ENCODE measurements at regions of chr19 and their contacts with region 1.

Region 1: DNA sequence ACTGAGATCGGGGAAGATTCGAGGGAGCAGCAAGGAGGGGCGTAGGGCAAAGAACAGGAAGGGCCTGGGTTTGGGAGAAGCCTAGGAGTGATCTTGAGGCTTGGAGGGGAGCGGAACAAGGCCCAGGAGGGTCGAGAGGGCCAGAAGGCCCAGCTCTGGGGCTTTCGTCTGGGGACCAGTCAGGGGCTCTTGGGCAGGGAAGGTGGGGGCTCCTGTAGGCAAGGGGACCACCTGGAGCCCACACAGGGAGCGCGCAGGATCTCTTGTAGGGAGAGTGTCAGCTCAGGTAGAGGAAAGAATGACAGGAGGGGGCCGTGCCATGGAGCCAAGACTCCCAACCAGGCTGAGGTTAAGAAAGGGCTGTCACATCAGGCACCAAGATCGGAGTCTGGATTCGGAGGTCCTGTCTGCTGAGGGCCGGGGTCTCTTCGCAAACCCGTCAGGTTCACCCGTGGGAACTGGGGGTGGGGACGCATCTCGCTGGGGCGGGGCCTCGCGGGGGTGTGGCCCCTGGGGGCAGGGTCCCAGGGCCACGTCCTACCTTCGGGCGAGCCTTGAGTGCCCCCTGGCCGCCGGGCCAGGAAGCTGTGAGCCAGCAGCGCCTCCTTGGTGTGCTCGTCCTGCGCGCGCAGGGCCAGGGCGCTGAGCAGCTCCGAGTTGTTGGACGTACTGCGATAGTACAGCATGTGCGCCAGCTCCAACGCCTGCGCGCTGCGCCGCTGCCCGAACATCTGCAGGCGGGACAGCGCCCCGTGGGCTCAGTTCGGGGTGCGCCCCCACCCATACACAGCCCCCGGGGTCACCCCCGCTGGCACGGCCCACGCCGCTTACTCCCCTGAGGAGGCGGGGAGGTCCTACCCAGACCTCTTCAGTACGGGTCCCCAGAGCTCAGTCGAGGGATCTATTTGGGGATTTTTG is 8.4 kb downstream of the EMP3 start:
- DNase-seq: peak; percentile 90 to 96 (median 93)
- ATAC-seq: peak; percentile 77
- H3K4me3 ChIP-seq: peak overlapping the region; percentile 77
- H3K4me3 Mint-ChIP-seq: peak overlapping the region; percentile 83 to 100 (median 97)
- H3K27ac ChIP-seq: peak overlapping the region; percentile 95
- H3K27ac Mint-ChIP-seq: peak overlapping the region; percentile 93 to 100 (median 97)
- H3K4me1 ChIP-seq: peaks cover 32 to 43% of the 10 kb centered on the region in 2 donors
- H3K4me1 Mint-ChIP-seq: peaks cover 25 to 61% (median 47%) of the 10 kb centered on the region in 7 donors
- H3K27me3 ChIP-seq: no peaks in the 10 kb centered on the region
- H3K27me3 Mint-ChIP-seq: no peaks in the 10 kb centered on the region

Region 2: GRCh38 chr19:48203732-48204628 is 129.7 kb before region 1 on chr19:
- CTCF ChIA-PET with region 1: no interaction called
- POLR2A ChIA-PET with region 1: interaction called, 11 read pairs
- intact Hi-C with region 1: no loop called
- DNase-seq: peak; percentile 73 to 90 (median 89)
- ATAC-seq: peak; percentile 100
- H3K4me3 ChIP-seq: peak overlapping the region; percentile 73
- H3K4me3 Mint-ChIP-seq: no peak overlapping the region
- H3K27ac ChIP-seq: peak overlapping the region; percentile 81
- H3K27ac Mint-ChIP-seq: no peak overlapping the region
- H3K4me1 ChIP-seq: peaks cover 8 to 19% of the 10 kb centered on the region in 2 donors
- H3K4me1 Mint-ChIP-seq: peaks cover 4 to 34% (median 18%) of the 10 kb centered on the region in 7 donors
- H3K27me3 ChIP-seq: no peaks in the 10 kb centered on the region
- H3K27me3 Mint-ChIP-seq: no peaks in the 10 kb centered on the region

Region 3: GRCh38 chr19:48290771-48291488 is 42.8 kb before region 1 on chr19:
- CTCF ChIA-PET with region 1: interaction called, 5 read pairs
- POLR2A ChIA-PET with region 1: no interaction called
- intact Hi-C with region 1: loop called in 1 of 2 experiments (anchors 1 kb)
- DNase-seq: peak; percentile 22 to 79 (median 56)
- ATAC-seq: peak; percentile 79
- H3K4me3 ChIP-seq: peak overlapping the region; percentile 72
- H3K4me3 Mint-ChIP-seq: peak overlapping the region; percentile 71 to 86 (median 81)
- H3K27ac ChIP-seq: no peak overlapping the region
- H3K27ac Mint-ChIP-seq: peak overlapping the region in 2 of 9 donors; percentile 9 to 46
- H3K4me1 ChIP-seq: peaks cover 6 to 7% of the 10 kb centered on the region in 2 donors
- H3K4me1 Mint-ChIP-seq: peaks cover 0 to 8% (median 3%) of the 10 kb centered on the region in 7 donors
- H3K27me3 ChIP-seq: peaks cover 0 to 3% of the 10 kb centered on the region in 2 donors
- H3K27me3 Mint-ChIP-seq: peaks cover 0 to 9% (median 4%) of the 10 kb centered on the region in 5 donors

Region 4: DNA sequence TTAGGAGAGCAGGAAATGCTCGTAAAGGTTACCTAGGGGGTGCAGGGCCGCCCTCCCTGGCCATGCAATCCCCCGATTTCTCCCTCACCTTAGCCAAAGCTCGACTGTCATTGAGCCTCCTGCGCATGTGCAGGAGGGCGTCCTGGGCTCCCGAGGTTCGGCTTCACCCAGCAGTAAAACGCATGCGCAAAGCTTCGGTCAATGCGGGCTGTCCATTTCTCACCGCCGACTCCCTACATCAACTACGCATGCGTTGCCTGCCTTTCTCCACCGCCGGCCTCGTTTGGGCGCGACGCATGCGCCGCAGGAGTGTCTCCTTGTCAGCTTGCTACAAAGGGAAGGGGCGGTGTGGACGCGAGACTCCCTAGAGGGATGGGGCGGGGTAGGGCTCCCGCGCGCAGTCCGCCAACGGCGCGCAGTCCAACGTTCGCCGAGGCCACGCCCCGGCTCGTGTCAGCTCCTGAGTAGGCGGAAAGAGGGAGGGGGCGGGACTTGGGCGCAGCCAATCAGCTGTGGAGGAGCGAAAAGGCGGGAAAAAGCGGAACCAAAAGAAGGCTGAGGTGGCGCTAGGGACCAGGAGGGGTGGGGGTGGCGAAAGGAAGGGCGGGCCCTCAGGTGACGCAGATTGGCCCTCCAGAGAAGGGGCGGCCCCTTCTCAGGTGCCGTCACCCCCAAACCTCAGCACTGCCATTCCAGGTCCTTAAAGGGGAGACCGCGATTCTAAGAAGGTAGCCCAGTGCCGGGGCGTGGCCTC is 30.3 kb after region 1 on chr19 and contains the starts of genes SYNGR4 and TMEM143:
- CTCF ChIA-PET with region 1: interaction called, 8 read pairs
- POLR2A ChIA-PET with region 1: interaction called, 47 read pairs
- intact Hi-C with region 1: loop called (anchors 1 kb)
- DNase-seq: peak; percentile 91 to 100 (median 99)
- ATAC-seq: peak; percentile 96
- H3K4me3 ChIP-seq: peak within 1 kb of the TSS; percentile 87
- H3K4me3 Mint-ChIP-seq: peak within 1 kb of the TSS; percentile 80 to 97 (median 92)
- H3K27ac ChIP-seq: peak within 1 kb of the TSS; percentile 86
- H3K27ac Mint-ChIP-seq: peak within 1 kb of the TSS; percentile 89 to 98 (median 95)
- H3K4me1 ChIP-seq: peaks cover 9 to 13% of the 10 kb centered on the region in 2 donors
- H3K4me1 Mint-ChIP-seq: peaks cover 0 to 28% (median 6%) of the 10 kb centered on the region in 7 donors
- H3K27me3 ChIP-seq: no peaks in the 10 kb centered on the region
- H3K27me3 Mint-ChIP-seq: peaks cover 0 to 3% (median 0%) of the 10 kb centered on the region in 5 donors
- total RNA-seq, gene SYNGR4: not detected
- total RNA-seq, gene TMEM143: 11.6 to 39.8 (median 20.1) TPM

Region 5: GRCh38 chr19:48492925-48493717 is 159.4 kb after region 1 on chr19:
- CTCF ChIA-PET with region 1: interaction called, 3 read pairs
- POLR2A ChIA-PET with region 1: no interaction called
- intact Hi-C with region 1: loop called in 1 of 2 experiments (anchors 1 kb)
- DNase-seq: peak; percentile 69 to 87 (median 78)
- ATAC-seq: peak; percentile 87
- H3K4me3 ChIP-seq: peak overlapping the region; percentile 41
- H3K4me3 Mint-ChIP-seq: peak overlapping the region; percentile 58 to 84 (median 72)
- H3K27ac ChIP-seq: no peak overlapping the region
- H3K27ac Mint-ChIP-seq: peak overlapping the region; percentile 20 to 86 (median 67)
- H3K4me1 ChIP-seq: peaks cover 4 to 25% of the 10 kb centered on the region in 2 donors
- H3K4me1 Mint-ChIP-seq: peaks cover 17 to 51% (median 43%) of the 10 kb centered on the region in 7 donors
- H3K27me3 ChIP-seq: no peaks in the 10 kb centered on the region
- H3K27me3 Mint-ChIP-seq: peaks cover 0 to 57% (median 6%) of the 10 kb centered on the region in 5 donors

Region 6: GRCh38 chr19:48618916-48619691 is 285.4 kb after region 1 on chr19 and contains the starts of genes RPL18 and SPHK2:
- CTCF ChIA-PET with region 1: no interaction called
- POLR2A ChIA-PET with region 1: interaction called, 3 read pairs
- intact Hi-C with region 1: loop called in 1 of 2 experiments (anchors 1 kb)
- DNase-seq: peak; percentile 89 to 97 (median 95)
- ATAC-seq: peak; percentile 89
- H3K4me3 ChIP-seq: peak within 1 kb of the TSS; percentile 96
- H3K4me3 Mint-ChIP-seq: peak within 1 kb of the TSS; percentile 88 to 99 (median 96)
- H3K27ac ChIP-seq: peak within 1 kb of the TSS; percentile 95
- H3K27ac Mint-ChIP-seq: peak within 1 kb of the TSS; percentile 96 to 99 (median 98)
- H3K4me1 ChIP-seq: peaks cover 26 to 45% of the 10 kb centered on the region in 2 donors
- H3K4me1 Mint-ChIP-seq: peaks cover 40 to 64% (median 54%) of the 10 kb centered on the region in 7 donors
- H3K27me3 ChIP-seq: no peaks in the 10 kb centered on the region
- H3K27me3 Mint-ChIP-seq: no peaks in the 10 kb centered on the region
- total RNA-seq, gene RPL18: 1,570 to 2,826 (median 2,745) TPM
- total RNA-seq, gene SPHK2: 20.1 to 34.7 (median 30.5) TPM

Region 7: DNA sequence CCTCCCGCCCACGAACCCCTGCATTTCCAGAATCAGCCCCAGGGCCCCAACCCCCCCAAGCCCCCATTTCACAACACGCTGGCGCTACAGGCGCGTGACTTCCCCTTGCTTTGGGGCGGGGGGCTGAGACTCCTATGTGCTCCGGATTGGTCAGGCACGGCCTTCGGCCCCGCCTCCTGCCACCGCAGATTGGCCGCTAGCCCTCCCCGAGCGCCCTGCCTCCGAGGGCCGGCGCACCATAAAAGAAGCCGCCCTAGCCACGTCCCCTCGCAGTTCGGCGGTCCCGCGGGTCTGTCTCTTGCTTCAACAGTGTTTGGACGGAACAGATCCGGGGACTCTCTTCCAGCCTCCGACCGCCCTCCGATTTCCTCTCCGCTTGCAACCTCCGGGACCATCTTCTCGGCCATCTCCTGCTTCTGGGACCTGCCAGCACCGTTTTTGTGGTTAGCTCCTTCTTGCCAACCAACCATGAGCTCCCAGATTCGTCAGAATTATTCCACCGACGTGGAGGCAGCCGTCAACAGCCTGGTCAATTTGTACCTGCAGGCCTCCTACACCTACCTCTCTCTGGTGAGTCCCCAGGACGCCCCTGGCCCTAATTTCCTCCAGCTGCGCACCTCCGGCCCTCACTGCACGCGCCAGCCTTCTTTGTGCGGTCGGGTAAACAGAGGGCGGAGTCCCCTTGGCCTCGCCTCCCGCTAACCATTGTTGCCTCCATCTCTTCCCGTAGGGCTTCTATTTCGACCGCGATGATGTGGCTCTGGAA is 631.5 kb after region 1 on chr19 and contains the start of gene FTL:
- CTCF ChIA-PET with region 1: no interaction called
- POLR2A ChIA-PET with region 1: no interaction called
- intact Hi-C with region 1: loop called in 1 of 2 experiments (anchors 5 kb)
- DNase-seq: peak; percentile 77 to 93 (median 84)
- ATAC-seq: peak; percentile 85
- H3K4me3 ChIP-seq: peak within 1 kb of the TSS; percentile 86
- H3K4me3 Mint-ChIP-seq: peak within 1 kb of the TSS; percentile 94 to 100 (median 99)
- H3K27ac ChIP-seq: peak within 1 kb of the TSS; percentile 73
- H3K27ac Mint-ChIP-seq: peak within 1 kb of the TSS; percentile 93 to 100 (median 97)
- H3K4me1 ChIP-seq: peaks cover 30 to 37% of the 10 kb centered on the region in 2 donors
- H3K4me1 Mint-ChIP-seq: peaks cover 42 to 69% (median 62%) of the 10 kb centered on the region in 7 donors
- H3K27me3 ChIP-seq: no peaks in the 10 kb centered on the region
- H3K27me3 Mint-ChIP-seq: no peaks in the 10 kb centered on the region
- total RNA-seq, gene FTL: 888 to 1,929 (median 1,286) TPM